Dorsolateral prefrontal cortex (tissue), 120 donors: ENCODE measurements at regions of chr9 and their contacts with region 1.

Region 1: GRCh38 chr9:99819856-99820684 is 1.6 kb upstream of the NR4A3 start:
- DNase-seq: peak; percentile 82 to 93 (median 91)
- H3K4me3 ChIP-seq: peak overlapping the region; percentile 67 to 100 (median 91)
- H3K27ac ChIP-seq: peak overlapping the region; percentile 84 to 100 (median 99)
- H3K27me3 ChIP-seq: peaks cover 0 to 5% (median 0%) of the 10 kb centered on the region in 45 donors
- CTCF ChIP-seq: peak in 38 of 56 donors; percentile 3 to 56 (median 37)

Region 2: GRCh38 chr9:98796364-98797101 is 1023.5 kb before region 1 on chr9 and contains the start of gene ANKS6:
- intact Hi-C with region 1: loop called in 1 of 2 experiments (anchors 5 kb)
- DNase-seq: peak; percentile 60 to 91 (median 76)
- H3K4me3 ChIP-seq: peak within 1 kb of the TSS; percentile 49 to 88 (median 78)
- H3K27ac ChIP-seq: peak within 1 kb of the TSS; percentile 56 to 97 (median 90)
- H3K27me3 ChIP-seq: no peaks in the 10 kb centered on the region
- CTCF ChIP-seq: peak in 53 of 56 donors; percentile 22 to 75 (median 49)
- total RNA-seq, gene ANKS6: 21.8 to 47.3 (median 33.7) TPM

Region 3: DNA sequence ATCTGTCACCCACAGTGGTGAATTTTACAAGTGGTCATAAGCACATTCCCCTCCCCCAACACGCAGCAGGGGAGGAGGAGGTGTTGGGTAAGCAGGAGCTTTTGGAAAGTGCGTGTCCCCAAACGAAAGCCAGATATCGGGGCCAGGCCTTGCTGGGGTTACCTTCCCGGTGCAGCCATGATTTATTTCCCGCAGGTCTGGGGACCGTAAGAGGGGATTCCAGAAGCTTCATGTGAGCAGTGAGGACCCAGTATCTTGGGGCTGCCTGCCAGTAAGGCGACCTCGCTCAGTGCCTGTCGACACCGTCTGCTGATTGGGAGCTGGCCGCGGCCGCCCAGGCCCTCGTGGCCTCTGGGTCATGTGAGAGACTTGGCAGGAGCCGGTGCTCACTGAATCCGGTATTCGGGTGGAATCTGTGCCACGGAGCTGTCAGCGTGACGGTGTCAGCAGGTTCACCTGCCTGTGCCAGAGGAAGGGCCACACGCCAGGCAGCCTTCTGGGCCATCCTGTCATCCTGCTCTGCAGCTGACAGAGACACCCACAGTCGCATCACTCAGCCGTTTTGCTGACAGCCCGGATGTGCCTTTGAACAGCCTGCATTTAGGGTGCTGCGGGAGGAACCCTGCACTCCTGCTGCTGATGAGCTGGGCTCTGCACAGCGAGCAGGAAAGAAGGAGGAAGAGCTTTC is 560.7 kb before region 1 on chr9:
- intact Hi-C with region 1: loop called (anchors 5 to 10 kb)
- DNase-seq: peak; percentile 70 to 96 (median 84)
- H3K4me3 ChIP-seq: peak overlapping the region; percentile 13 to 72 (median 53)
- H3K27ac ChIP-seq: peak overlapping the region; percentile 38 to 94 (median 85)
- H3K27me3 ChIP-seq: no peaks in the 10 kb centered on the region
- CTCF ChIP-seq: peak in 7 of 56 donors; percentile 7 to 43 (median 10)

Region 4: DNA sequence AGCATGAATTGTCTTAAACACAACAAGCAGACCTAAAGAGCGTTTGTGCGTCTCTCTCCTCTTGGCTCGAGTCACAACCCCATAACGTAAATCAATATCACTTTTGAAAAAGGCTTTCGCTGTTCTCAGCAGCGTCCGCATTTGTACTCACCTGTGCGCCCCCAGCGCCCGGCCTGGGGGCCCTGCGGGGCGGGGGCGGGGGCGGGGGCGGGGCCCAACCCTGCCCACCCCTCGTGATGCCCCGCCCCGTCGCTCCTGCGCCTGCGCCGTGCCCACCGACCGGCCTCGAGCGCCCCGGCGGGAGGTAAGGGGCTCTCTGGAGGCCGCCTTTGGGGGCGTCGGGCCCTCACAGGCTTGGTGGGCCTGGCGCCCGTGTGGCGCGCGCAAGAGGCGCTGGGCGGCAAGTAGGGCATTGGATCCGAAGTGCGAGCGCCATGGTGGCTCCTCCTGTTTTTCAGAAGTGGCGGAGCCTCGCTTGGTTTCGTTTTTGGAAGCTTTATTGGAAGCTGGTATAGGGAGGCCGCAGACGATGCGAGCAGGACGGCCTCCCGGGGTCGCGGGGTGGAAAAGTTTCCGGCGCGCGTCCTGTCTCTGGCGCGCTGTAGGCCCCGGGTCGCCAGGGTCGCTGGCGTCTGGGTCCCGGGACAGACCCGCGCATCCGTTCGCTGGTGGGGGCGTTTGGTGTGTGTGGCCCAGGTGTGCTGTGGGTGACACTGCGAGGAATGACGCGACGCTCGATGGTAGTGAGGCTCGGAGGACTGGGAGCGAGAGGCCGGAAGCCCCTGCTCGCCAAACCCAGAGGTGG is 86.5 kb after region 1 on chr9 and contains the start of gene STX17:
- intact Hi-C with region 1: loop called (anchors 1 to 2 kb)
- DNase-seq: peak; percentile 57 to 89 (median 76)
- H3K4me3 ChIP-seq: peak within 1 kb of the TSS; percentile 60 to 100 (median 96)
- H3K27ac ChIP-seq: peak within 1 kb of the TSS; percentile 51 to 99 (median 92)
- H3K27me3 ChIP-seq: no peaks in the 10 kb centered on the region
- CTCF ChIP-seq: peak in 33 of 56 donors; percentile 2 to 56 (median 28)
- total RNA-seq, gene STX17: 24.2 to 64.4 (median 36.5) TPM

Region 5: DNA sequence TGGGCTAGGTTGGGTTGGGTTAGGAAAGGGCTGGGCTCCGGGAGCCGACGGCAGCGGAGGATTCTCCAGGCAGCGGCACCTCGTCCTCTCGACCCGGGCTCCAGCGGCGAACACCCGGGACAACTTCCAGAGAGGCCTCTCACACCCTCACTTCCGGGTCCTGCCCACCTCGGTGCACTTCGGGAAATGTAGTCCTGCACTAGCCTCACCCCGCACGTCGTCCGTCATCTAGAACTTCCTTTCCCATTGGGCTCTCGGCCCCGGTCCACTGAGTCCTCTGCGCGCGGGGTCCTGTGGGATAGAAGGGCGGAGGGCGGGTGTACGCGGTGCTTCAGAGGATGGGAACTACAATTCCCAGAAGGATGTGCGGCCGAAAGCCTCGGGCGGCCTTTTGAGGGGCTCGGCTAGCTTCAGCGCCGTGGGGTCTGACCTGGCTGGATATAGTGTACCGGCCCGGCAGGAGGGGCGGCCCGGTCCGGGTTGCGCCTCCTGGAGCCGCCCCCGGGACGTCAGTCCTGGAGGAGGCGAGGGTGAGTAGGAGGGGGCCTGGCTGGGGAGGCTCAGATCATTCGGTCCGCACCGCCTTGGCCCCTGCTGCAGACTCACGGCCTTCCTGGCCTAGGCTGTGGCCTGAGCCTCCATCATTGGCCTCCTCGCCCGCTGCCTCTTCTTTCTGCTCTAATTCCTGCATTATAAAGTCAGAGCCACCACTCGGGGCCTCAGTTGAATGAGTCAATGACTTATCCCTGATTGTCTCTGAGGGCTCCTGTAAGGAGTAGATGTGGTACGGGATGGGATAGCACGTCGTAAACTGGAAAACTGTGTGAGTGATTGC is 279.0 kb after region 1 on chr9 and contains the starts of genes ERP44 and INVS:
- intact Hi-C with region 1: loop called (anchors 5 to 10 kb)
- DNase-seq: peak; percentile 99 to 100 (median 100)
- H3K4me3 ChIP-seq: peak within 1 kb of the TSS; percentile 65 to 100 (median 95)
- H3K27ac ChIP-seq: peak within 1 kb of the TSS; percentile 48 to 98 (median 90)
- H3K27me3 ChIP-seq: no peaks in the 10 kb centered on the region
- CTCF ChIP-seq: peak in 17 of 56 donors; percentile 3 to 39 (median 19)
- total RNA-seq, gene ERP44: 11.9 to 21.4 (median 16.7) TPM
- total RNA-seq, gene INVS: 13.3 to 35.5 (median 22.7) TPM

Region 6: DNA sequence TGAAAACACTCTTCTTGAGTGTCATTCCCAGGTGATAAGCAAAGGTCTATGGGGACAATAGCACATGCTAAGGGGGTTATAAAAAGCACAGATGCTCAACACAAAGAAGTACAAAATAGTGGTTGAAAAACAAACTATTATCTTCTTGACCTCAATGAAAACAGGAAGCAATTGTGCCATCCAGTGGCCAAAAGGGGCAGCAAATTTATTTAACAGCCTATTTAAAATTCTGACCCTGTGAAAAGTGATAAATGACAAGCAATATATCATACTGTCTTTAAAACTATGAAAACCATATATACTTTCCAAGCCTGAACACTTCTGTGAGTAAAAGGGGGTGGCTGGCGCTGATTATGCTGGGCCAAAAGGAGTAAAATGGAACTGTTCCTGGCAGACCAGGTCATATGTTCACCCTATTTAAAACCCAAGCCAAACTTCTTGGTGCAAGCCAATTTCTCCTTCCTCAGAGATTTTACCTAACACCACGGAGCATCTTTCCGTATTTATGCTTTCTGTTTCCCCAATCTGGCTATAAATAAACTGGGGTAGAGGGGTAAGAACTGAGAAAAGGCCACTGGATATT is 503.0 kb after region 1 on chr9:
- intact Hi-C with region 1: loop called (anchors 5 to 10 kb)
- DNase-seq: peak in 3 of 10 donors; percentile 14 to 56 (median 31)
- H3K4me3 ChIP-seq: no peak overlapping the region
- H3K27ac ChIP-seq: no peak overlapping the region
- H3K27me3 ChIP-seq: no peaks in the 10 kb centered on the region
- CTCF ChIP-seq: peak; percentile 47 to 88 (median 72)